ENCODE measurements at regions of chr1 and their contacts with region 1.

Region 1: GRCh38 chr1:165134431-165134830 is 222.1 kb downstream of the LMX1A start:
- DNase-seq: no peak
- ATAC-seq: no peak
- H3K4me3 ChIP-seq: no peak overlapping the region
- H3K4me3 Mint-ChIP-seq: no peak overlapping the region
- H3K27ac ChIP-seq: no peak overlapping the region
- H3K27ac Mint-ChIP-seq: no peak overlapping the region
- H3K4me1 ChIP-seq: no peaks in the 10 kb centered on the region
- H3K4me1 Mint-ChIP-seq: no peaks in the 10 kb centered on the region
- H3K27me3 ChIP-seq: no peaks in the 10 kb centered on the region
- H3K27me3 Mint-ChIP-seq: peaks cover 25% of the 10 kb centered on the region
- CTCF ChIP-seq: no peak

Region 2: GRCh38 chr1:165144757-165145397 is 10.4 kb after region 1 on chr1:
- CTCF ChIA-PET with region 1: interaction called, 14 read pairs
- POLR2A ChIA-PET with region 1: no interaction called
- intact Hi-C with region 1: no loop called
- DNase-seq: peak; percentile 27
- ATAC-seq: no peak
- H3K4me3 ChIP-seq: no peak overlapping the region
- H3K4me3 Mint-ChIP-seq: no peak overlapping the region
- H3K27ac ChIP-seq: no peak overlapping the region
- H3K27ac Mint-ChIP-seq: no peak overlapping the region
- H3K4me1 ChIP-seq: no peaks in the 10 kb centered on the region
- H3K4me1 Mint-ChIP-seq: no peaks in the 10 kb centered on the region
- H3K27me3 ChIP-seq: no peaks in the 10 kb centered on the region
- H3K27me3 Mint-ChIP-seq: peaks cover 9% of the 10 kb centered on the region
- CTCF ChIP-seq: peak; percentile 74

Region 3: DNA sequence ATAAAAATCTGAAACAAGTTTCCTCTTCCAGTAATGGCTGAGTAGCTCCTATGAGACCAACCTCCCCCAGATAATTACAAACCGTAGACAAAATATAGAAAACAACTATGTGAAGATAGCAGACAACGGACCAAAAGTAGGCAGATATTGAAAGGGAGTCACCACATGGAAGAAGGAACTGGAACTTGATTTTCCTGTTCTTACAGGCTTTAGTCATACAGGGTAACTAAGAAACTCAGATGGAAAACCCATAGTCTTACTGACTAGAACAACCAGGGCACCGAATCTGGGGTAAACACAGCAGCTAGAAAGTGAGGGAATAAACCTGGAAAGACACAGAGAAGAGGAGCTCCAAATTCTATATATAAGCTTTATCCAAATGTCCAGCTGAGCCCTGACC is 196.1 kb after region 1 on chr1:
- CTCF ChIA-PET with region 1: no interaction called
- POLR2A ChIA-PET with region 1: no interaction called
- intact Hi-C with region 1: no loop called
- DNase-seq: no peak
- ATAC-seq: no peak
- H3K4me3 ChIP-seq: no peak overlapping the region
- H3K4me3 Mint-ChIP-seq: no peak overlapping the region
- H3K27ac ChIP-seq: no peak overlapping the region
- H3K27ac Mint-ChIP-seq: no peak overlapping the region
- H3K4me1 ChIP-seq: no peaks in the 10 kb centered on the region
- H3K4me1 Mint-ChIP-seq: no peaks in the 10 kb centered on the region
- H3K27me3 ChIP-seq: peaks cover 0 to 13% (median 0%) of the 10 kb centered on the region in 4 experiments
- H3K27me3 Mint-ChIP-seq: peaks cover 34% of the 10 kb centered on the region
- CTCF ChIP-seq: no peak